ENCODE measurements at regions of chr11 and their contacts with region 1.

Region 1: DNA sequence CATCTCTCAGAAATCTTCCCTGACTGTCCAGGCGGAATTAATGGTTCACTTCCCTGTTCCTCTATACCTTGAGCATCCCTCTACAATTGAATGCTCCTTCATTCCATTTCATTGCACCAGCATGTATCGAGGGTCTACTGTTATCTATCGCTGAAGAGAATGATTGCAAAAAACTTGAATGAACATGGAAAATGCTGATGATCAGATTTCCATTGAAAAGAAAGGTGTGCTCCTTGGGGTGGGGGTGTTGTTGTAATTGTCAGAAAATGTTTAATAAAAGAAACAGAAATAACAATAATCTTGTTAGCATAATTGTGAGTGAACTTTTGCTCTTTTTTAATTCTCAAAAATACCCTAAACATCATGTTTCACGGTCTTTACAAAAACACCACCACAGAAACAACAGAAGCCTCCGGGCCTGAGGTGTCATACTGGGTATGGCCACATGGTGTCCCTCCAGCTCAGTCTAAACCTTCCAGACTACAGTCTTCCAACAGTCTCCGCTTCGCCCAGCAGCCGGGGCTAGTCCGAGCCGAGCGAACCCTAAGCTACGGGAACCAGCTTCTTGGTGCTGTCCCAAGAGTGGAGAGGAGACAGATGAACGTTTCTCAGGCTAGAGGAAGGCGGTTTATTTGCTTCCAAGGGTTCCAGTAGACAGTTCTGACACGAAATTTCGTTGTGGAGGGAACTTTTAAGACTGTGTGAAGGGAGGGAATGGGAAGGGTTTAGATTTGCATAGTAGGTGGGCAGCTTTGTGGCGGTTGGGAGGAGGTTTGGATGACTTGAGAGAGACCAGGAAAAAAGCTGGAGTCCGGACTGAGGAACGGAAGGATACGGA is 75.8 kb upstream of the ZBED5 start:
- DNase-seq: peak; percentile 92
- ATAC-seq: peak; percentile 85

Region 2: DNA sequence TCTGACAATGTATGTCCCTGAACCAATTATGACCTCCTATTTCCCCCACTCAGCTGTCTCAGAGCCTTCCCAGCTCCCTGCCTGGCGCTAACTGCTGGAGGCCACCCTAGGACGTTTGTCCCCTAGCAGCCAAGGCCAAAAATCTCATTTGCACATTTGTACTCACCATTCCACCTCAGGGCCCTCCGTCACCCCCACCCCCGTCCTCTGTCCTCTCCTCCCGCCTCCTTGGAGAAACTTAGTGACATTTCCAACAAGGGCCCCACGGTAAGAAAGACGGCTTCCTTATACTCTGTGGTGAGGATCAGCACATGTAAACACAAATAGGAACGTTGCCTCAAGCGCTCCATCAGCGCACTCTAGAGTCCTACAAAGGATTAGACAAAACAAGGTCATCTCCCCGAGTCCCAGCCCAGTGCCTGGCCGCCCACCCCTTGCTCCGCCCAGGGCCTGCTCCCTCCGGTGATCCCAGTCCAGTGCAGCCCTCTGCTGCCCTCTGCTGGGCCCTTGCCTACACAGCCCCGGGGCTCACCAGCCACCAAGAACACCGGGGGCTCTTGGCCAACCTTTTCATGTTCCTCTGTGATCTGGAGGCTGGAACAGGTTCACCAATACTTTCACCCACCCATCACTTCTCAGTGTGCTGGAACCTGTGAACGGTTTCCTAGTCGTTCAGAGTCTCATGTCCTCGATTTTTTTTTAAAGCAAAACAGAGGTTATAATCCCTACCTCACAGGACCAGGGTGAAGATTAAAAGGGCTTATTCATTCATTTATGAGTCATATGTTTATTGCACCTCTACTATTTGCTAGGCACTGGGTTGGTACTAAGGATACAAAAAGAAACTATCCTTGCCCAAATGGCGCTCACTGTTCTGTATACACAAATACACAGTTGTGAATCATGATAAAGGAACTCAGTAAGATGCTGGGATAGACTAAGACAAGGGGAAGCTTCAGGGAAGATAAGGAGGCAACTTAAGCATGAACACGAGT is 197.9 kb before region 1 on chr11:
- intact Hi-C with region 1: no loop called
- DNase-seq: peak; percentile 98
- ATAC-seq: peak; percentile 100

Region 3: DNA sequence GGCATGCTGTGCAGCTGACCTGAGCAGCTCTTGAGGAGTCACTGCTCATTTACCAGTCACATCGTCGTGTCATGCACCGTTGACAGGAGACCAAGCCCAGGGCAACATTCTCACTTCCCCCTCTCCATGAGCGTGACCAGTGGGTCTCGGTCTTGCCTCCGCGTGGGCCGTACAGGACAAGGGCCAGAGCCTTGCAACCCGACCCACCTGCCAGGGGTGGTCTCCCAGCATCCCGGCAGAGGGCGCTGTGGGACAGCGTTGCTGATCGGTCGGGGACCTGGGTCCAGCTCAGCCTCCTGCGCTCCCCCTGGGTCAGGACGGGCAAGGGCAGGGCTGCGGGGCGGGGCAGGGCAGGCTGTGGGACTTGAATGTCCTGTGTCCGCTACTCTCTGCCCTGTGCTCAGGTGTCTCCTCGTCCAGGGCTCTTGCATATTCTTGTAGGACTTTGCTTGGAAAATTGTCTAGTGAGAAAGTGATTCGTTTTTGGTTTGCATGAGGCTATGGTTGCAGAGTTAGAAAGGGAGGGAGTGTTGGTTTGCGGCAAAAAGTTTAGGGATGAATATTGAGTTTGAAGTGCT is 141.2 kb before region 1 on chr11:
- intact Hi-C with region 1: loop called (anchors 5 kb)
- DNase-seq: peak; percentile 94
- ATAC-seq: peak; percentile 93

Region 4: DNA sequence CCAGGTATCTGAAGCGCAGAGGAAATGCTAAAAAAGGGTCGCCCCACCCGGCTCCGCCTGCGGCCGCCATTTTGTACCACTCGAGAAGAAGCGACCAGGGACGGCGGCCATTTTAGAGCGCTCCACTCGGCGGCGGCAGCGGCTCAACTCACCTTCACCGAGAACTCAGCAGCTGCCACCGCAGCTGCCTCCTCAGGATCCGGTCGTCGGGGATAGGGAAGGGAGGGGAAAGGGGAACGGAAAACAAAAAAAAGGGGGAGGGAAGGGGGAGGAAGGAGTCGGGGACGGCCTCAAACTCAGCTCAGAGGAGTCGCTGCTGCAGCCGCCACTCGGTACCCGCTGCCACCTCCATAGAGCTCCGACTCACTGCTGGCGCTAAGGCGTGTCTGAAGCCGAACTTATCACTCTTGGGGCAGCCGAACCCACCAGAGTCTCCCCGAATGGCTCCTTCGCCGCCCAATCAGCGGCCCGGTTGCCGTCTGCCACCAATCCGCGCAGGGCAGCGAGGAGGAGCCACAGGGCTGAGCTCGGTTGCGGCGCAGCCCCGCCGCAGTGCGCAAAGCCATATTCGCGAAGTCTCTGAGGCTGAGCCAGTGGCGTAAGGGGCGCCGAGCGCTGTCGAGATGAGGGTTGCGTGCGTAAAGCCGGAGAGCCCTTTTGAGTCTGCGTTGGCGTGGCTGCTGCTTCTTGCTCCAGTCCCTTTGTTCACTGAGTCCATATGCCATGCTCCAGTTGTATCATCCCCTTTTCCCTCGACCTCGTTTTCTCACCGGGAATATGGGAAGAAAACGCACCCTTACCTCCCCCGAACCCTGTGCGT is 124.9 kb before region 1 on chr11 and contains the start of gene EIF4G2:
- intact Hi-C with region 1: loop called (anchors 5 kb)
- DNase-seq: peak; percentile 99
- ATAC-seq: peak; percentile 98
- total RNA-seq, gene EIF4G2: 752 TPM

Region 5: DNA sequence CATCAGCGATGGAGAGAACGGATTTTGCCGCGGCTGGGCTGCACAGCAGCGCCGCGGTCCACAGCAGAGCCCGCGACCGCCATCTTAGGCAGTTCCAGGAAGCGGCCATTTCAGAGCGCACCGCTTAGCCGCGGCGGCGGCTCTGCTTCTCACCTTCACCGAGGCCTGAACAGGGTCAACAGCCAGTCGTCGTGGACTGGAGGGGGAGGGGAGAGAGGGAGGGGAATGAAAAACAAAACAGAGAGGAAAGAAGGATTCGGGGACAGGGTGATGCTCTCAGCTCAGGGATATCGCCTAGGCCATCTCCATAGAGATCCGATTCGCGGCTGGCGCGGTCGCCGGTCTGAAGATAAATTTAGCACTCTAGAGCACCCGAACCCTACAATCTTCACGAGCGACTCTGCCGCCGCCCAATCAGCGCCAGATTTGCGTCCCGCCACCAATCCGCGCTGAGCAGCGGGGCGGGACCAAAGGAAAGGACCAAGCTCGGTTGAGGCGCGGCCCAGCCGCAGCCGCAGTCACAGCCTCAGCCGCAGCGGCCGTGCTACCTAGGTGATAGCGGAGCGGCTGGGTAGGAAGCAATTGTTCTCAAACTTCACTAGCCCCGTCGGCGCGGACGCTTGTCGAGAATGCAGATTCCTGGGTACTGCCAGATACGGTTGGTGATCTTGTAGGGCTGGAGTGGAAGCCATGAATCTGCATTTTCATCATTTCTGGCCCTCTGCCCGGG is 75.8 kb before region 1 on chr11 and contains the start of gene ZBED5:
- intact Hi-C with region 1: loop called (anchors 1 kb)
- DNase-seq: peak; percentile 99
- ATAC-seq: peak; percentile 98
- total RNA-seq, gene ZBED5: 42.7 TPM

Region 6: GRCh38 chr11:11010624-11011127 is 77.0 kb after region 1 on chr11:
- intact Hi-C with region 1: loop called (anchors 1 kb)
- DNase-seq: no peak
- ATAC-seq: peak; percentile 87

Region 7: GRCh38 chr11:11022125-11022730 is 88.6 kb after region 1 on chr11:
- intact Hi-C with region 1: loop called (anchors 1 kb)
- DNase-seq: no peak
- ATAC-seq: no peak

Region 8: GRCh38 chr11:11157185-11157584 is 223.5 kb after region 1 on chr11:
- intact Hi-C with region 1: no loop called
- DNase-seq: no peak
- ATAC-seq: no peak